ENCODE measurements at regions of chr9 and their contacts with region 1.

Region 1: DNA sequence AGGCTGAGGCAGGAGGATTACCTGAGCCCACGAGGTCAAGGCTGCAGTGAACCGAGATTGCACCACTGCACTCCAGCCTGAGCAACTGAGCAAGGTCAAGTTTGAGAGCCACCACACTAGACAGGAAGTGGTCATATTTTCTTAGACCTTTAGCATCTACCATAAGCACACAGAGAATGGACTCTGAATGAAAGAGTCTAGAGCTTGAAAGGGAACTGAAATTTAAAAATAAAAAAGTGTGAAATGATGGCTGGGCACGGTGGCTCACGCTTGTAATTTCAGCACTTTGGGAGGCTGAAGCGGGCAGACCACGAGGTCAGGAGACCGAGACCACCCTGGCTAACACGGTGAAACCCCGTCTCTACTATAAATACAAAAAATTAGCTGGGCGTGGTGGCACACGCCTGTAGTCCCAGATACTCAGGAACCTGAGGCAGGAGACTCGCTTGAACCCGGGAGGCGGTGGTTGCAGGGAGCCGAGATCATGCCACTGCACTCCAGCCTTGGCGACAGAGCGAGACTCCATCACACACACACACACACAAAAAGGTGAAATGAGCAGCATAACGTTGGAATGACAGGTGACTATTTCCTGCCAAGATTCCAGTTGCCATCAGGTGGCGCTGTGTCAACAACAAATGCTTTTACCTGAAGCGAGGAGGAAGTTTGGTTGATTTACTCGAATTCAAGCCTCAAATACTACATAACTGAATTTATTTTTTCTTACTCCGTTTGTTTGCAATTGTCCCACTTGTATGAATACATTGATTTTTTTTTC is 21.3 kb upstream of the AK3 start:
- DNase-seq: peak; percentile 42 to 65
- ATAC-seq: peak; percentile 69 to 80
- H3K4me3 ChIP-seq: peak overlapping the region; percentile 26 to 48 (median 32)
- H3K27ac ChIP-seq: peak overlapping the region; percentile 39 to 50 (median 40)
- H3K4me1 ChIP-seq: peaks cover 9 to 13% of the 10 kb centered on the region in 2 donors
- H3K27me3 ChIP-seq: no peaks in the 10 kb centered on the region
- CTCF ChIP-seq: peak; percentile 78 to 87 (median 81)
- POLR2A ChIP-seq: no peak

Region 2: DNA sequence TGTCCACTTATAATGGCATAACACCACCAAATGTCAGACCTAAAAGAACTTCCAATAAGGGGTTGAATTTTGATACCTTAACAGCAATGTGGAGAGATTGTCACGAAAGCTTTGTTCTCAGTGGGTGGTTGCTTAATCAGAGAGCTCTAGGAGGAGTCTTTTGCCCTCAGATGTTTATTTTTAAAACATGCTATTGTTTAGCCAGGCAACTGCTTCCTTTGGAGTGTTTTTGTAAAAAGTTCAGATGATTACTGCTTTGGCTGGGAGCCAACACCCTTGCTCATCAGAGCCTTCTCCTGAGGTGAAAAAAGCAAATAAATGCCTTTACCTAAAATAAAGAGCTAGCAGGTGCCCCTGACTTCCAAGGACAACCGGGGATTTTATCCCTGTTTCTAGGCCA is 207.0 kb before region 1 on chr9:
- in situ Hi-C with region 1: no loop called
- intact Hi-C with region 1: no loop called
- DNase-seq: no peak
- ATAC-seq: peak; percentile 31 to 37
- H3K4me3 ChIP-seq: no peak overlapping the region
- H3K27ac ChIP-seq: peak overlapping the region; percentile 36 to 73 (median 50)
- H3K4me1 ChIP-seq: peaks cover 20 to 21% of the 10 kb centered on the region in 2 donors
- H3K27me3 ChIP-seq: no peaks in the 10 kb centered on the region
- CTCF ChIP-seq: no peak
- POLR2A ChIP-seq: no peak

Region 3: GRCh38 chr9:4849364-4849763 is 87.1 kb after region 1 on chr9:
- in situ Hi-C with region 1: no loop called
- intact Hi-C with region 1: loop called (anchors 5 kb)
- DNase-seq: no peak
- ATAC-seq: no peak
- H3K4me3 ChIP-seq: no peak overlapping the region
- H3K27ac ChIP-seq: peak overlapping the region; percentile 65 to 85 (median 72)
- H3K4me1 ChIP-seq: peaks cover 21 to 28% of the 10 kb centered on the region in 2 donors
- H3K27me3 ChIP-seq: no peaks in the 10 kb centered on the region
- CTCF ChIP-seq: no peak
- POLR2A ChIP-seq: no peak

Region 4: GRCh38 chr9:4927043-4927471 is 164.8 kb after region 1 on chr9:
- in situ Hi-C with region 1: no loop called
- intact Hi-C with region 1: loop called (anchors 5 kb)
- DNase-seq: no peak
- ATAC-seq: peak in 1 of 2 donors; percentile 11
- H3K4me3 ChIP-seq: peak overlapping the region in 2 of 4 donors; percentile 6 to 18
- H3K27ac ChIP-seq: peak overlapping the region; percentile 24 to 49 (median 40)
- H3K4me1 ChIP-seq: peaks cover 39 to 51% of the 10 kb centered on the region in 2 donors
- H3K27me3 ChIP-seq: no peaks in the 10 kb centered on the region
- CTCF ChIP-seq: no peak
- POLR2A ChIP-seq: no peak

Region 5: DNA sequence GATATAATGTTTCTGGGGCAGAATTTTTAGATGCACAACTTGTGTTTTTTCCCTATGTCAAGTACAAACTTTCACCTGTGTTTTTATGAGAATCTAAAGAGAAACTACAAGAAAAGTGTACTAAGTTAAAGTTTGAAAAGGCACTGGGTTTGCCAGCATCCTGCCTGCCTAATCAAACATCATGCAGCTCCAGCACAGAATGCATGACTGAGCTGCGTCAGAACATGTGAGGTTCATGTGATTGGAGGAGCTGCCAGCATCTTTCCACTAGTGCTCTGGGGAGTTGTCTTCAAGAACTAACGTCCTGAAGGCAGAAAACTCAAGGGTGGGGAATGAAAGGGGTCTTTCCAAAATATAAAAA is 820.5 kb after region 1 on chr9:
- in situ Hi-C with region 1: loop called in 1 of 4 experiments (anchors 25 kb)
- intact Hi-C with region 1: no loop called
- DNase-seq: peak; percentile 30 to 31
- ATAC-seq: peak; percentile 40 to 54
- H3K4me3 ChIP-seq: no peak overlapping the region
- H3K27ac ChIP-seq: no peak overlapping the region
- H3K4me1 ChIP-seq: peaks cover 10 to 12% of the 10 kb centered on the region in 2 donors
- H3K27me3 ChIP-seq: no peaks in the 10 kb centered on the region
- CTCF ChIP-seq: no peak
- POLR2A ChIP-seq: no peak